BJ (cell line): ENCODE measurements at regions of chr15 and their contacts with region 1.

Region 1: GRCh38 chr15:92521624-92522008 is 127.9 kb downstream of the ST8SIA2 start:
- DNase-seq: peak; percentile 33
- H3K4me3 ChIP-seq: no peak overlapping the region
- H3K27me3 ChIP-seq: no peaks in the 10 kb centered on the region
- CTCF ChIP-seq: peak; percentile 70

Region 2: GRCh38 chr15:92586383-92586942 is 64.8 kb after region 1 on chr15:
- CTCF ChIA-PET with region 1: no interaction called
- POLR2A ChIA-PET with region 1: no interaction called
- DNase-seq: no peak
- H3K4me3 ChIP-seq: no peak overlapping the region
- H3K27me3 ChIP-seq: no peaks in the 10 kb centered on the region; the same call in 1 of the 2 replicates
- CTCF ChIP-seq: no peak

Region 3: GRCh38 chr15:92655178-92655995 is 133.8 kb after region 1 on chr15 and contains the start of gene FAM174B:
- CTCF ChIA-PET with region 1: no interaction called
- POLR2A ChIA-PET with region 1: no interaction called
- DNase-seq: no peak
- H3K4me3 ChIP-seq: peak within 1 kb of the TSS; percentile 55
- H3K27me3 ChIP-seq: peaks cover 6% of the 10 kb centered on the region
- CTCF ChIP-seq: no peak
- polyA plus RNA-seq, gene FAM174B: 5.1 and 5.8 TPM in 2 replicates

Region 4: GRCh38 chr15:92714477-92715401 is 193.1 kb after region 1 on chr15:
- CTCF ChIA-PET with region 1: interaction called, 57 read pairs
- POLR2A ChIA-PET with region 1: interaction called, 3 read pairs
- DNase-seq: no peak
- H3K4me3 ChIP-seq: peak overlapping the region; percentile 48
- H3K27me3 ChIP-seq: no peaks in the 10 kb centered on the region; the same call in 1 of the 2 replicates
- CTCF ChIP-seq: peak; percentile 89